ENCODE measurements at regions of chr12 and their contacts with region 1.

Region 1: DNA sequence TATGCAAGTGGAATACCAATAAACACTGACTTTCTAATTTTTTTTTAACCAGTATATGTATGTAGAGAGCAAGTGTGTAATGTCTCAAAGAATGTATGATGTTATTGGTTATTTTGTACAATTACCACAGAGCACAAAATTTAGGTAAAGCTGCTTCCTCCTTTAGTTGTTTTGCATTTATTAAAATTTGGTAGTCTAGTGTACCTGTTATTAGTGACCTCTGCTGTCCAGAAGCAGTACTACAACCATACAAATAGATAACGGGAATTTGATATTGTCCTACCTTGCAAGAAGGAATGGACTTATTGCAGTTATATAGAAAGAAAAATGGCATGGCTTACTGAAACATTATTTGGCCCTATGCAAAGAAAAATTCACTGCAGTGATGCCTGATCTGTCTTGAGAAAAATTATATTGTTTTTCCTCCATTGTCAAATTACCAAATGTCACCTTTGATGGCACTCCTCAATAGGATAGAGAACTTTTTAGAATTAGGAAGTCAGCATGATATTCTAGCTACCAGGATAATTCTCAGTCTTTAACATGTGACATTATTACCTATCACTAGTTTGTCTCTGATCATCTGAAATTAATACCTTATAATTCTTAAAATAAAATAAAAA is 153.9 kb upstream of the RMST start:
- DNase-seq: no peak
- H3K4me3 ChIP-seq: no peak overlapping the region
- H3K27ac ChIP-seq: no peak overlapping the region
- H3K4me1 ChIP-seq: peaks cover 1 to 12% (median 5%) of the 10 kb centered on the region in 4 experiments
- H3K27me3 ChIP-seq: peaks cover 0 to 6% (median 0%) of the 10 kb centered on the region in 4 experiments; a peak in 1 of 7 replicates
- CTCF ChIP-seq: peak in 2 of 3 experiments; percentile 13 to 53; a peak in 2 of 4 replicates
- EP300 ChIP-seq: no peak
- POLR2A ChIP-seq: no peak
- RAD21 ChIP-seq: peak; percentile 46 to 58

Region 2: DNA sequence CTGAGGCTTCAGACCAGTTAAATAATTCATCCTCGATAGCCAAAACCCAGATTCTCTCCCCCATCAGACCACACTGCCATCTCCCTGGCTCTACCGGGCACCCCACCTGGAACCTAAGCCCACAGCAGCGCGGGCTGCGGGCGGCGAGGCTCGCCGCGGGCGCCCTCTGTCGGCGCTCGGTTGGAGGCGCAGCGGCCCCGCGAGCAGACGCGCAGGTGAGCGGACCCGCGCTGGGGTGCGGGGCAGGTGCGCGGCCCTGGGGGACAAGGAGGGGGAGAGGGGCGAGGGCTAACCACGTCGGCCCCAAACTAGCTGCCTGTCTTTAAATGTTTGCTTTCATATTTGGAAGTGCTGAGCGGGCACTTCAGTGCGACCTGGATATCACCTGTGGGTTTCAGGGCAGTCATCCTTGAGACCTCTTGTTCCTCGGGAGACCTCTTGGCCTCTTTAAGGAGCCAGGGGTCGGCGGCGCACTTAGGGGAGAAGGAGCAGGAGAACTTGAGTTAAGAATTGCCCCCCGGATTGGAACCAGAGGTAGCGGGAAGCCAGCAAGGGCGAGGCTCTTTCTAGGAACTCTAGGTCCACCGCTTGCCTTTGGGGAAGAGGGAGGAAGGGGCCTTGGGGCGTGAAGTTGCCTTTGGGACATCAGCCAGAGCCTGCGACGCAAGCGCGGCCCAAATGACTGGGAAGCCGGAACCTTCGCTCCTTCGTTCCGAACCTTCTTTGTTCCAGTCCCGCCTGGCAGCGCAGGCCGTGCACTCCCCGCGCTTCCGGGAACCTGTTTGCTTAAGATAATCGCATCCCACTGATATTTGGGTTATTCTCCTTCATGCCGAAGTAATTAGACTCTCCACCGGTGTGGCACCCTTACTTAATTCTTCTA is 323.0 kb before region 1 on chr12:
- CTCF ChIA-PET with region 1: interaction called, 20 read pairs
- POLR2A ChIA-PET with region 1: no interaction called
- DNase-seq: peak in 1 of 2 experiments; percentile 82
- H3K4me3 ChIP-seq: peak overlapping the region; percentile 44 to 66 (median 51)
- H3K27ac ChIP-seq: no peak overlapping the region
- H3K4me1 ChIP-seq: peaks cover 0 to 14% (median 5%) of the 10 kb centered on the region in 4 experiments; a peak in 4 of 7 replicates
- H3K27me3 ChIP-seq: peaks cover 0 to 3% (median 2%) of the 10 kb centered on the region in 4 experiments; a peak in 3 of 7 replicates
- CTCF ChIP-seq: peak; percentile 83 to 97 (median 83)
- EP300 ChIP-seq: peak in 1 of 2 experiments; percentile 48; a peak in 1 of 3 replicates
- POLR2A ChIP-seq: no peak
- RAD21 ChIP-seq: peak; percentile 81 to 92

Region 3: DNA sequence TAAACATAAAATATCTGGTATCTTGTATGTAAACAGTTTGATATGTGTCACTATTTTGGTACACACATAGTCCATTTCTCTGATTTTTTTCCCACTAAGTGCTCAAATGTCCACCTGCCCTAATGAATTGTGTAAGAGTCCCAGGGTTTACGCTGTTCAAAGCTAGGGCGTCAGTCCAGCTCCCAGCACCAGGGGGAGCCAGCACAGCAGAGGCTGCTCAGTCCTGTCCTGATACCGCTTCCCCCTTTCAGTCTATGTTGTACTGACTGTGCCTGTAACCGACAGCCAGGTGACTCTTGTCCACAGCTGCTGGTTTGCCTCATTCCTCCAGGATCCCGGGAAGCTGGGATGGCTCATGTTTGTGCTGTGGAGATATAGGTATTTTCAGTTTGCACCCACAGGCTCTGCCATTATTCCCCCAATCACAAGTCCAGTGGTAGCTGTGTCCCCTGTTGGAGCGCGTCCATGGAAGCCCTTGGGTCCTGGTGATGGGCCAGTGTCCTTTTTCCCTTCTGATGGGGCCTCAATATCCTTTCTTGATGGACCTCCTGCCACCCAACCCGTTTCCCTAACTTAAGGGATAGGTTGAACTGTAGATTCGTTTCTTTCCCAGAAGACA is 159.6 kb before region 1 on chr12:
- CTCF ChIA-PET with region 1: interaction called, 15 read pairs
- POLR2A ChIA-PET with region 1: no interaction called
- DNase-seq: peak; percentile 49 to 88
- H3K4me3 ChIP-seq: no peak overlapping the region
- H3K27ac ChIP-seq: no peak overlapping the region
- H3K4me1 ChIP-seq: no peaks in the 10 kb centered on the region; a peak in 1 of 7 replicates
- H3K27me3 ChIP-seq: no peaks in the 10 kb centered on the region
- CTCF ChIP-seq: peak; percentile 93 to 97 (median 97)
- EP300 ChIP-seq: no peak
- POLR2A ChIP-seq: no peak
- RAD21 ChIP-seq: peak; percentile 96

Region 4: GRCh38 chr12:97177481-97177880 is 131.2 kb before region 1 on chr12:
- CTCF ChIA-PET with region 1: no interaction called
- POLR2A ChIA-PET with region 1: no interaction called
- DNase-seq: no peak
- H3K4me3 ChIP-seq: no peak overlapping the region
- H3K27ac ChIP-seq: no peak overlapping the region
- H3K4me1 ChIP-seq: no peaks in the 10 kb centered on the region
- H3K27me3 ChIP-seq: no peaks in the 10 kb centered on the region
- CTCF ChIP-seq: no peak
- EP300 ChIP-seq: no peak
- POLR2A ChIP-seq: no peak
- RAD21 ChIP-seq: no peak

Region 5: DNA sequence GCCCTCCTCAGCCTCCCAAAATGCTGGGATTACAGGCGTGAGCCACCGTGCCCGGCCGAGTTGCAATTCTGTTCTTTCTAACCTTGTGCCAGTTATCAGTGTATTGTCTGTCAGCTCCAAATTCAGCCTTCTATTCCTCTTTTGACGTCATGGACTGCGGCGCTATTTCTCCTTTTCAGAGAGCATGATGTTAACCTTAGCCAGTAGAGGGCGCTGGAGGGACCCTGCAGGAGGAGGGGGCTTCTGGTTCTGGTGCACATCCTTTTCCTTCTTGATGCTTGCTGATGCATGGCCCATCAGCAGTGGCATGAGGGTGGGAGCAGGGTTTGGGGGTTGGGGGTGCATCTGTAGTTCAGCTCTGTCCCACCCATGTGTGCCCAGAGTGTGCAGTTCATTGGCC is 25.4 kb before region 1 on chr12:
- CTCF ChIA-PET with region 1: interaction called, 15 read pairs
- POLR2A ChIA-PET with region 1: no interaction called
- DNase-seq: peak in 1 of 2 experiments; percentile 71
- H3K4me3 ChIP-seq: no peak overlapping the region
- H3K27ac ChIP-seq: no peak overlapping the region
- H3K4me1 ChIP-seq: no peaks in the 10 kb centered on the region
- H3K27me3 ChIP-seq: no peaks in the 10 kb centered on the region
- CTCF ChIP-seq: peak; percentile 70 to 80 (median 78)
- EP300 ChIP-seq: no peak
- POLR2A ChIP-seq: no peak
- RAD21 ChIP-seq: peak; percentile 65 to 75

Region 6: GRCh38 chr12:97321621-97322020 is 12.9 kb after region 1 on chr12:
- CTCF ChIA-PET with region 1: interaction called, 11 read pairs
- POLR2A ChIA-PET with region 1: no interaction called
- DNase-seq: no peak
- H3K4me3 ChIP-seq: no peak overlapping the region
- H3K27ac ChIP-seq: no peak overlapping the region
- H3K4me1 ChIP-seq: peaks cover 3 to 24% (median 15%) of the 10 kb centered on the region in 4 experiments; a peak in 6 of 7 replicates
- H3K27me3 ChIP-seq: peaks cover 0 to 4% (median 2%) of the 10 kb centered on the region in 4 experiments; a peak in 1 of 7 replicates
- CTCF ChIP-seq: no peak
- EP300 ChIP-seq: no peak
- POLR2A ChIP-seq: no peak
- RAD21 ChIP-seq: no peak